KBM-7 (cell line): ENCODE measurements at regions of chr6 and their contacts with region 1.

Region 1: DNA sequence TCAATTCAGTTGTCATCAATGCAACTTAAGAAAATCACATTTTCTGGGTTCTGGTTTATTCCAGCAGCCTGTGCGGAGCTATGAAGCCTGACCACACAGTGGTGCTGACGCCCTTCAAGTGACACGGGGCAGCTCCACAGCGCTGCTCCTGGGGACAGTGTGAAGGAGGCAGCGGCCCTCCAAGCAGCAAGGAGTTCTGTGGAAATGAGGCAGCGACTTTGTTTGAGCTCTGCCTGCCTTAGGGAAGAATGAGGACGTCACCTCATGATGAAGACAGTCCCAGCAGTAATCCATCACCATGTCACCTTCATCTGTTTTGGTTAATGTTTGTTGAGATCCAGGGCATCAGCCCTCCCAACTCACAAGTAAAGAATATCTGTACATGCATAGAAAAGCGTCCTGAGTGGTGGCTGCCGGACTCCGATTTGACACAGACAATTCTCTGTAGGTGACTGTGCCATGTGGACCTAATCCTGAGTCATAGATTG is 168.5 kb upstream of the UST start:
- DNase-seq: peak; percentile 78

Region 2: DNA sequence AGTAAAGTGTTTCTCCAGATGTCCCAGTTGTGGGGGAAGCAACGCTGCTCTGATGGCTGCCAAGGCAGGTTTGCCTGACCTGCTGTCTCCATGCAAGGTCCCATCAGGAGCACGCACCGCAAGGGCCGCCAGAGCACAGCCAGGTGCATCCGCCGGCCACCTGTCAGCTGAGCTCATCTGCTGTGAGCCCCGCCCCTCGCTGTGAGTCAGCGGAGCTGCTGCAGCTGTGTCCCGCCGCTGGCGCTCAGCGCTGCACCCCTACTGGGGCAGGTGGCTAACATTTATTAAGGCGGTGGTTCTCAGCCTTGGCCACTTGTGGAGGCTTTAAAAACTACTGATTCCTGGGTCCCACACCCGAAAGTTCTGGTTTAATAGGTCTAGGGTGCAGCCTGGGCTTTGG is 394.2 kb after region 1 on chr6:
- in situ Hi-C with region 1: loop called (anchors 25 kb)
- DNase-seq: no peak